ENCODE measurements at regions of chr6 and their contacts with region 1.

Region 1: DNA sequence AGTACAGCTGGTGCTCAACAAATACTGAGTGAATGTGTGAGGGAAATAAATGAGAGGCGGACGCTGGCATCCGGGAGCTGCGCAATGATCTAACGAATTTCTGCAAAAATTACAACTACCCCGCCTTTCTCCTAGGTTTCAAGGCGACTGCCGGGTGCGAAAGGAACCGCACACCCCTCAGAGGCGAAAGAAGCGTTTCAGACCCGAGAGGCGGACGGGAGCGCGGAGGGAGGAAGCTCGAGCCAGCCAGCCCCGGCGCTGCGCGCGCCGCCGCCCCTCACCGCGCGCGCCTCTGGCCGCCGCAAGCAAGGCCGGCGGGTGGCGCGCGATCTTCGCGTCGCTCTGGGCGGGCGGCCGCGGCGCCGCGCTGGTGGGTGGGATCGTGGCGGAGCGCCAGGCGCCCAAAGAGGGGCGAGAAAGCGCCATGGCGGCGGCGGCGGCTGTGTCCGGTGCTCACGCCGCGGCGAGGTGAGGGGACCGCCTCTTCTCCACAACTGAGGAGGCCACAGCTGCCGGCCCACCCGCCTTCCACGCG is at the start of gene BLTP3A:
- DNase-seq: peak; percentile 94
- H3K4me3 ChIP-seq: peak within 1 kb of the TSS; percentile 72 to 76
- H3K27ac ChIP-seq: peak within 1 kb of the TSS; percentile 71 to 80
- H3K4me1 ChIP-seq: peaks cover 0 to 8% of the 10 kb centered on the region in 2 experiments; a peak in 2 of 4 replicates
- H3K27me3 ChIP-seq: no peaks in the 10 kb centered on the region
- CTCF ChIP-seq: no peak
- EP300 ChIP-seq: 0 out of 4 replicates have a peak, but pooled peaks of 1 of the 2 experiments have one; percentile 4
- RAD21 ChIP-seq: no peak; the same call in 1 of the 2 replicates
- polyA plus RNA-seq, gene BLTP3A: 3.1 and 4.4 TPM in 2 replicates

Region 2: DNA sequence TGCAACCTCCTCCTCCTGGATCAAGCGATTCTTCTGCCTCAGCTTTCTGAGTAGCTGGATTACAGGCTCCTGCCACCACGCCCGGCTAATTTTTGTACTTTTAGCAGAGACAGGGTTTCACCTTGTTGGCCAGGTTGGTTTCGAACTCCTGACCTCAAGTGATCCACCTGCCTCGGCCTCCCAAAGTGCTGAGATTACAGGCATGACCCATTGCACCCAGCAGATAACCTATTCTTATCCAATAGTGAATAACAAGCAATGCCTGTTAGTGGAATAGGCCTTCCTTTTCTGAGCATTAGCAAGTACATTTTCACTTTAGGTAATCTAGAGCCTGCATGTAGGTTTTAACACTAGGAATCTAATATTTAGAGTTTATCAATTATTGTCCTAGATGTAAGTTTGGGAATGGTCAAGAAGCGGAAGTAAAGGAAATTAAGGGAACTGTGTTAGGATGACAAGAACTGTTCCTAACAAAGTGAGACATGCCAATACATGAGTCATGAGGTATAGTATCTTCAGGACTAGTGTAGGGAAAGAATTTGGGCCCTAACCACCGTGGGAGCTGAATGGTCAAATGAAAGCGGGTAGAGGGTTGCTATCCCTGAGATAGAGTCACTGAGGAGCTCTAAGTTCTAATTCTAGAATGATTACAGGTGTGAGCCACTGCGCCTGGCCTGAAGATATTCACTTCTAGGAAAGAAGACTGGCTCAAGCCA is 15.1 kb after region 1 on chr6:
- CTCF ChIA-PET with region 1: interaction called, 12 read pairs
- POLR2A ChIA-PET with region 1: interaction called, 4 read pairs
- DNase-seq: no peak
- H3K4me3 ChIP-seq: no peak overlapping the region
- H3K27ac ChIP-seq: no peak overlapping the region
- H3K4me1 ChIP-seq: peaks cover 0 to 7% of the 10 kb centered on the region in 2 experiments; a peak in 2 of 4 replicates
- H3K27me3 ChIP-seq: no peaks in the 10 kb centered on the region
- CTCF ChIP-seq: no peak
- EP300 ChIP-seq: no peak
- RAD21 ChIP-seq: no peak